ENCODE measurements at regions of chr10 and their contacts with region 1.

Region 1: DNA sequence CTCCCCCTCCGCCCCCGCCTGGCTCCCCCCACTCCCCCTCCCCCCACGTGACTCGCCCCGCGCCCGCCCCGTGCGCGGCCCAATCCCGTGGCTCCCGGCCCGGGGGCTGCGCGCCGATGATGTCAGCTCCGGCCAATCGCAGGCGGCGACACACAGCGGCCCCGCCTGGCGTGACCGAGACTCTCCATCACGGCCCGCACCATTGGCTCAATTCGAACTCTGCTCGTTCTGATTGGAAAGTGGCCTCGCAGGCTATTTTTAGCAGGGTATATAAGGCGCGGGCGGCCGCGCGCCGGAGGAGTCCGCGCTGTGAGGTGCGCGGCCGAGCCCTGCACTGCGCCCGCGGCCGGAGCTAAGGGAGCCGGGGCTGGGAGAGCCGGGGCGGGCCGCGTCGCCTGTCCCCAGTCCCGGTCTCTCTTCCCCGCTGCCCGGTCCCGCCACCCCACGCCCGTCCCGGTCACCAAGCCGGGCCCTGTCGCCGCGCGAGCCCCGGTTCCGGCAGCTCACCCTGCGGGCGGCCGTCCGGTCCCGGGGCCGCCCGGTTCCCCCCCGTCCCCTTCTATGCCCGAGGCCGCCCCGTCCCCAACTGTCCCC is 345 bp upstream of the KLF6 start:
- DNase-seq: peak; percentile 99 to 100 (median 99)
- ATAC-seq: peak; percentile 89 to 92
- H3K4me3 ChIP-seq: peak overlapping the region; percentile 91
- H3K27ac ChIP-seq: peak overlapping the region; percentile 98
- H3K4me1 ChIP-seq: peaks cover 3% of the 10 kb centered on the region
- H3K27me3 ChIP-seq: no peaks in the 10 kb centered on the region

Region 2: DNA sequence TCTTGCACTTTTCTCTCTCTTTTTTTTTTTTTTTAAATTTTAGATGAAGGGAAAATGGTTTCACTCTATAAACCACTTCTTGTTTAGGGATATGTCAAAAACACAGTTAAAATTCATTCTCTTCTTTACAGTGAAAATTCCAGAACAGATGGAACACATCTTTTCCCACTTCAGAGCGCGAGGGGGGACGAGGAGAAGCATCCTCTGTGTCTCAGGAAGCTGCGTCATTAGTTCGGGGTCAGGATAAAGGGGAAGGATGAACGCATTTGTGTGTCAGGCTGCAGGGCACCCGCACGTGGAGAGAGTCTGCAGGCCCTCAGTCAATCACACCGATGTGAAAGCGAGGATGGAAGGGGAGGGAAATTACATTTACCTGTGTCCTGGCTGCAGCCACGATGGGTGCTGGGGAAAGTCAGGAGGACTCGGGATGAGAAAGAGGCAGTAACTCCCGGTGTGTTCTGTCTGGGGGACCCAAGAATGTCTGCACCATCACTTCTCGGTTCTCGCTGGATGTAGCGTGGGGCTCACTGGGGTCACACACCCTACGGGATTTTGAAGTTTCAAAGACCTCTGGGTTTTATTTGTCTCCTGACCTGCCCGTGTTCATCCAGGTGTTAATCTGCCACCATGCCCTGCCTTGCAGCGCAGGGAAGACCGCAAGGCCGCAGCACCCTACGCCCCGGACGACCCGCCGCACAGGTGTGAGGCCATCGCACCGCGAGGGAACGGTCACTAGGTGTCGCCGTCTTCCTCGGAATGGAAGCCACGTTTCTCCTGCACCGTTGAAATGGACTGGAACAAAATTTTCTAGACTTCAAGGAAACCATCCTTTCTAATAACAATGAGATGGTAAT is 546.1 kb before region 1 on chr10:
- intact Hi-C with region 1: loop called in 2 of 4 experiments (anchors 10 kb)
- DNase-seq: peak; percentile 75 to 88 (median 86)
- ATAC-seq: peak; percentile 80 to 86
- H3K4me3 ChIP-seq: no peak overlapping the region
- H3K27ac ChIP-seq: no peak overlapping the region
- H3K4me1 ChIP-seq: no peaks in the 10 kb centered on the region
- H3K27me3 ChIP-seq: no peaks in the 10 kb centered on the region

Region 3: GRCh38 chr10:3749600-3749999 is 35.8 kb before region 1 on chr10:
- intact Hi-C with region 1: loop called in 1 of 4 experiments (anchors 5 kb)
- DNase-seq: no peak
- ATAC-seq: peak; percentile 56 to 73
- H3K4me3 ChIP-seq: peak overlapping the region; percentile 12
- H3K27ac ChIP-seq: peak overlapping the region; percentile 98
- H3K4me1 ChIP-seq: peaks cover 11% of the 10 kb centered on the region
- H3K27me3 ChIP-seq: no peaks in the 10 kb centered on the region

Region 4: DNA sequence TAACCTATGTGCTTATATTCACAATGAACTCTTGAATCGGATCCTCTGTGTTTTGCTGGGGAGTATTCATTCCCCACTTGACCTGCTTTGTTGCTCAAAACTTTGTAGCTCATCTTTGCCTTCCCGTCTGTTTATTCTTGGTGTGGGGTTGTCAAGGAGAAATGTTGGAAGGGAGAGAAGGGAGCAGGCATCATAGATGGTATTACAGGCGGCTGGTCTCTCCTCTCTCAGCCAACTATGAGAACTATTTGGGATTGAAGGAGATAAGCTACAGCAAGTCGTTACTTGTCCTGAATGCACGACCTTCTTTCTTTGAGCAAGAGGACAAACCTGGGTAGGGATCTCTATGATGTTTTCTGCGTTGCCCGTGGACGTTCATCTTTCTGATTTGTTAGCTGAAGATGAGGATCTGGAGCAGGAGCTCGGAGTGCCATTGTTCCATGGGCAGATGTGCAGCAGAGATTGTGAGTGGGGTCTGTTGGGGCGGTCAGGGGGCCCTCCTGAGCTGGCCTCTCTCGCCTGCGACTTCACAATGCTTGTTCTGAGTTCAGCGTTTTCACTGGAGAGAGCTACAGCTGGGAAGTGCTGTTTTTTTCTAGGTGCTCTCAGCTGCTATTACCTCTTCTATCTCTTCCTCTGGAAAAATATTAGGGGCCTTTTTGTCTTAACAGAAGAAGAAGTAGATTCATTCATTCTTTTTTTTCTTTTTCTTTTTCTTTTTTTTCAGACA is 126.5 kb after region 1 on chr10:
- intact Hi-C with region 1: loop called in 2 of 4 experiments (anchors 10 kb)
- DNase-seq: peak in 1 of 3 donors; percentile 38
- ATAC-seq: peak; percentile 80 to 87
- H3K4me3 ChIP-seq: peak overlapping the region; percentile 45
- H3K27ac ChIP-seq: peak overlapping the region; percentile 98
- H3K4me1 ChIP-seq: peaks cover 3% of the 10 kb centered on the region
- H3K27me3 ChIP-seq: no peaks in the 10 kb centered on the region

Region 5: DNA sequence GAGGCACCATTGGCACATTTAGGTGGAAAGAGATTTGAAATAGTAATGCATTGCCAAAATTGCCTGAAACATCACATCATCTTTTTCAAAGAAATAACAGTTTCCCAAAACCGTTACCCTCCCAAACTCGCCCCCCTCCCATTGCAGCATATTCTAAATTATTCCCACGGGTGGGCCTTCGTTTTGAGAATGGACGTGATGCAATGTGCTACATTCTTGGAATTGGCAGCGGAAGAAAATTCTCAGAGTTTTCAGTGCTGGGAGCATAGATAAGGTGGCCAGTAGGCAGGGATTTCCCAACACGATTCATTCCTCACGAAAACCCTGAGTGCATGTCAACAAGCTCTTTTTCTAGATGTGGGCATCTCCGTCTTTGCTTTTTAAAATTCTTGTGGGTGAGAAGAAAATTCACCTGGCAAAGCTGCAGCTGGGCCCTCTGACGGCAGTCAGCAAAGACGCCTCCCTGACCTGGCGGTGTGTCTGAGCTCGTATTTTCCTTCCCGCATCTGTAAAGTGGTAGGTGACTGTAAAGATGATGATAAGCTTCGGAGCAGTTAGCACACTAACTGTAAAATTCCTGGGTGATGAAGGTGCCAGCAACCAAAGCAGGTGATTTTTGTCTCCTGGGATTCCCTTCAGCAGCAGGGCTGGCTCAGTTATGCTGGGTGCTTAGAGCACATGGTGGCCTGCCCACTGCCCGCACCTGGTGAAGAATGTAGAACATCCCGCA is 141.5 kb after region 1 on chr10:
- intact Hi-C with region 1: no loop called
- DNase-seq: peak in 1 of 3 donors; percentile 41
- ATAC-seq: peak; percentile 52 to 55
- H3K4me3 ChIP-seq: no peak overlapping the region
- H3K27ac ChIP-seq: no peak overlapping the region
- H3K4me1 ChIP-seq: peaks cover 4% of the 10 kb centered on the region
- H3K27me3 ChIP-seq: no peaks in the 10 kb centered on the region

Region 6: DNA sequence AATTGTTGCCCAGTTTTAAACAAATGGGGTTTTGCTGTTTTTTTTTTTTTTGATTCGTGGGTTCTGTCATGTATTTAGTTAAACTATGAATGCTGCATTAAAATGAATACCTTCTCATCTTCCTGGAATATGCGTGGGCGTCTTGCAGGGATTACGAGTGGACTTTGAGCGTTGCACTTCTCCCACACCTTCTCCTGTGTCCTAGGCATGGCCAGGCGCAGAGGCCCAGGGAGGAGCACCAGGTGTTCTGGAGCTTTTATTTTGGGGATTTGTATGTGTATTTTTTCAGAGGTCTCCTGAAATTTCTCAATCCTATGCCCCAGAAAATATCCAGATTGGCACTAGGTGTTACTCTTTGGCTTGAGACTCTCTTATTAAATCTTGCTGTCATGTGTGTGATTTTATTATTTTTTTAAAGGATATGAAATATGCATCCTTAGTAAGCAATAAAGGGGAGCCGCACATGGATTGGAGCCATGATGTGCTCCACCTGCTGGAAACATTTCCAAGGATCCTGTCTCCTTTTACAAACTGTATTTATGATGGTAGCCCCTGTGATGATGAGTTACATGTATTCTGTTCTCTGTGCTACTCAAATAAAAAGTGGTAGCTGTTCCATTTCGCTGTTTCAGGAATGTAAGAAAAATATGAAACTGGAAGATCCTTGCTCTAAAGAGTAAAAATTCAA is 481.9 kb after region 1 on chr10:
- intact Hi-C with region 1: loop called in 1 of 4 experiments (anchors 10 kb)
- DNase-seq: no peak
- ATAC-seq: peak in 1 of 2 donors; percentile 9
- H3K4me3 ChIP-seq: no peak overlapping the region
- H3K27ac ChIP-seq: no peak overlapping the region
- H3K4me1 ChIP-seq: peaks cover 7% of the 10 kb centered on the region
- H3K27me3 ChIP-seq: no peaks in the 10 kb centered on the region

Region 7: DNA sequence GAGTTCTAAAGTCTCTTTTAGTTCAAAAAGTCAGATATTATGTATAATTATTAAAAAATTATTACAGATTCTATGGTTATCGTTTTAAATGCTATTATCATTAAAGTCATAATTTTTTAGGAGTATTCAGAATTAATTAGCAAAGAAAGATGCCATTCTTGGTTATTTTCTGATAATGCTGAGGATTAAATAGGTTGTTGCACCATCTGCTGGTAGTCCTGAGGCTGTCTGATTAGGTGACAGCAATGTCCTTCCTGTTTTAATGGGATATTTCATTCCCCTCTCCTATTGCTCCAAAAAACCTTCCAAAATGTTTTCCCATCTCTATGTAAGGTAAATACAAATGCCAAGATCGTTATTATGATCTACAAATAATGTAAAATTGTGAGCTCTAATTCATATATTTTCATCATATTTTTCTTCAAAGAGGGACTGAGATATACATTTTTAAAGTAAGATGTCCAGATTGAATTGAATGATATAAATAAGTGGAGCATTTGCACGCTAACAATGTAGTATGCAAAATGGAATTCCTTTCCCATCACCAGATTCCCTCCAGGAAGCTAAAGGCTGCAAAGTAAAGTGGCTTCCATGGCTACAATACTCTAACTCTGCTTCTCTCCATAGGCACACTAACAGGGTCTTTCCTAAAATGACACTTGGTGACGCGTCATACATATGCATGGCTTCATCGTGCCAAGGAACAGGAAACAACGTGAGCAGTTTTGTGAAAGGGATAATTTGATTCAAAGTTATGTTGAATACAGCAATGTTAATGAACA is 981.9 kb after region 1 on chr10:
- intact Hi-C with region 1: loop called in 1 of 4 experiments (anchors 10 kb)
- DNase-seq: no peak
- ATAC-seq: peak; percentile 53 to 74
- H3K4me3 ChIP-seq: no peak overlapping the region
- H3K27ac ChIP-seq: peak overlapping the region; percentile 58
- H3K4me1 ChIP-seq: peaks cover 3% of the 10 kb centered on the region
- H3K27me3 ChIP-seq: no peaks in the 10 kb centered on the region